ENCODE measurements at regions of chr11 and their contacts with region 1.

Region 1: DNA sequence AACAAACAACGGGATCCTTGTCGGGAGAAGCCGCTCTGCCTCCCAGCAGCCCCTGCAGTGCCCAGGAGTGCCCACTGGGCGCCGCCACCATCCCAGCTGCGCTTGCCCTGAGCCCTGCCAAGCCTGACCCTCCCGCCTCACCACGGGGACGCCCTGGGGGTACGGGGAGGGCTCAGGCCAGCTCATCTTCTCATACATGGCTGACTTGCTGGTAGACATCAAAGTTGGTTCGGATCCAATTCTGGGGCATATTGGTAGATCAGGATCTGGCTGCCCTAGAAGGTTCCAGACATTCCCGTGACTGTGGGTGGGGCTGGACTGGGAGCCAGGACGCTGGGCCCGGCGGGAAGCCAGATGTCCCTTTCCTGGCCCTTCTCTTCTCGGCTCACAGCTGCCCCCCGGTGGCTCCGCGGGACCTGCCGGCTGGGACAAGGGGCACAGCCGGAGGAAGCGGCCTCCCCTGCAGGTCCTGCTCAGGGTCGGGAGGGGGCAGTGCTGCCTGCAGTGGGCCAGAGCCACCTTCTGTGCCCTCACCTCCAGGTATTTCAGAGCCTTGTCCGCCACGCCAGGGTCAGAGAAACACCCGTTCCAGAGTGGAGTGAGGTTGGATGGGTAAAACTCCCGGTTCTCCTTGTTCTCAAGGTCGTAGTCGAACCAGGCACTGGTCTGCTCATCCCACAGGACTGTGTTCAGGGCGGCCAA is 10.6 kb upstream of the TREH start:
- DNase-seq: peak; percentile 86
- H3K4me3 Mint-ChIP-seq: peak overlapping the region; percentile 52
- H3K27ac Mint-ChIP-seq: peak overlapping the region; percentile 77
- H3K4me1 Mint-ChIP-seq: peaks cover 50% of the 10 kb centered on the region
- H3K27me3 Mint-ChIP-seq: peaks cover 5% of the 10 kb centered on the region

Region 2: DNA sequence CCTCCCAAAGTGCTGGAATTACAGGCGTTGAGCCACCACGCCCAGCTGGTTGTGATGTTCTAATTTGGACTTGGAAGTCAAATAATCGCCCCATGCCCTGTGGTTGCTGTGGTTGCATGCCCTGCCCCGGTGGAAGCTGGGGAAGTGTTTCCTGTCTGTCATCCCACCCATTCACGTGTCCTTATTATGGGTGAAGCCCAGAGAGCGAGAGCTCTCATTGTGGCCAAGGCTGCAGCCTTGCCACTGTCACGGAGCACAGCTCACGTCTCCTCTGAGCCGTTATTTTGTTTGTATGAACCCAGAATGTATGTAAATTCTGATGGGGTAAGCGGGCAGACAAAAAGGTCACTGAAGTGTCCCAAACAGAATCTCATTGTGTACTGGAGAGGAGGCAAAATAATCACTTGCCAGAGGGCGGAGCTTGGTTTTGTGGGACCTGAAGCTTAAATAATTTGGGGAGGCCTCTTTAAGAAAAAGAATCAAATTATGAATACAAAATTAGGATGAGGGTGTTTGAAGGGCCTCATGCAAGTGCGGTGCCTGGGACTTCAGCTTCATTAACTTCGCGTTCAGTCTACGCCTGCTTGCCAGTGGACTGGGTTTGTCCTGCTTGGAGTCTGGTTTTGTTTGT is 15.2 kb after region 1 on chr11:
- CTCF ChIA-PET with region 1: interaction called, 15 read pairs
- POLR2A ChIA-PET with region 1: no interaction called
- DNase-seq: peak; percentile 65
- H3K4me3 Mint-ChIP-seq: peak overlapping the region; percentile 8
- H3K27ac Mint-ChIP-seq: peak overlapping the region; percentile 79
- H3K4me1 Mint-ChIP-seq: peaks cover 27% of the 10 kb centered on the region
- H3K27me3 Mint-ChIP-seq: peaks cover 5% of the 10 kb centered on the region

Region 3: GRCh38 chr11:118956094-118956846 is 266.3 kb after region 1 on chr11 and contains the start of gene UPK2:
- CTCF ChIA-PET with region 1: interaction called, 12 read pairs
- POLR2A ChIA-PET with region 1: no interaction called
- DNase-seq: peak; percentile 91
- H3K4me3 Mint-ChIP-seq: no peak within 1 kb of the TSS
- H3K27ac Mint-ChIP-seq: peak within 1 kb of the TSS; percentile 61
- H3K4me1 Mint-ChIP-seq: peaks cover 4% of the 10 kb centered on the region
- H3K27me3 Mint-ChIP-seq: peaks cover 8% of the 10 kb centered on the region
- total RNA-seq, gene UPK2: 0.60 TPM in 1 of 2 experiments, not detected in the other

Measured in activated CD4-positive, alpha-beta T cell treated with anti-CD3 and anti-CD28 coated beads, Interleukin-2, amount 10 ng/mL, durations not matched to agents 7 days and 5 days (primary cell).